ENCODE measurements at regions of chr17 and their contacts with region 1.

Region 1: DNA sequence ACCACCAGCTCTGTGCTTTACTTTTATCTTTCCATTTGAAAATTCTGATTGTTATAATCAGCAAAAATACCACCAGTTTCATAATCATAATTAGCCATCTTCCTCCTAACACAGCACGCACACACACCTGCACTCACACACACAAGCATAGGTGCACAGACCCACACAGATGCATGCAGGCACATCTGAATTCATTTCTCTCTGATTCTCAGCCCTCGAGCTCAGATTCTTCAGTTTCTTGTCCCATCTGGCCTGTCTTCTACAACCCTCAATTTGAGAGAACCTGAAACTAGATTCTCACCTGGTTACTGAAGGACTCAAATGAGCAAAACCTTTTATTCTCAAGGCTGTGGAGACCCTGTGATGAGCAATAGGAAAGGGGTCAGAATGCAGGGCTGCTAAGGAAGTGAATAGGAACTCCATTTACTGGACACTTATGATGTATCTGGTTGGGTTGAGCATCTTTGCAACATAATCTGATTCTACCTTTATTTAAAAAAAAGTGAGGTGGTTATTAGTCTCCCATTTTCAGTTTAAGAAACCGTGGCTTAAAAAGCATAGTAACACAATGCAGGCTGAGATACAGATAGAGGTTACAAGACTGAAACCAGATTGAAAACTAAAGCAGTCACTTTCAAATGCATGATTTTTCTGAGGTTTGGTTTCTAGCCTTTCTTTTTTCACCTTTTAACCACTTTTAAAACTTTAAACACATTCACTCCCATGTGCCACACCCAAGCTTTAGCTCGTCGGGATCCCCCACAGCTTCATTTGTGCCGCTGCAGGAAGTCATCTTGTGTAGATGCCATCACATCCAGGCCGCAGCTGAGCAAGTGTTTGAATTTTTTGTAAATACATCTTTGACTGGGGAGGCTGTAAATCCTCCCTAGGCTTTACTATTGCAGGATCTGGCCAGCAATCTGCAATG is 9.4 kb downstream of the KRT33A start:
- DNase-seq: no peak
- H3K4me3 ChIP-seq: no peak overlapping the region
- H3K4me3 Mint-ChIP-seq: no peak overlapping the region
- H3K27ac ChIP-seq: no peak overlapping the region
- H3K27ac Mint-ChIP-seq: no peak overlapping the region
- H3K4me1 ChIP-seq: peaks cover 22 to 29% of the 10 kb centered on the region in 2 donors
- H3K4me1 Mint-ChIP-seq: peaks cover 25% of the 10 kb centered on the region
- H3K27me3 ChIP-seq: no peaks in the 10 kb centered on the region
- H3K27me3 Mint-ChIP-seq: peaks cover 4 to 6% (median 4%) of the 10 kb centered on the region in 3 donors
- CTCF ChIP-seq: no peak

Region 2: GRCh38 chr17:41278176-41278955 is 62.8 kb before region 1 on chr17:
- intact Hi-C with region 1: no loop called
- DNase-seq: no peak
- H3K4me3 ChIP-seq: no peak overlapping the region
- H3K4me3 Mint-ChIP-seq: no peak overlapping the region
- H3K27ac ChIP-seq: no peak overlapping the region
- H3K27ac Mint-ChIP-seq: no peak overlapping the region
- H3K4me1 ChIP-seq: no peaks in the 10 kb centered on the region
- H3K4me1 Mint-ChIP-seq: no peaks in the 10 kb centered on the region
- H3K27me3 ChIP-seq: peaks cover 11 to 12% of the 10 kb centered on the region in 2 donors
- H3K27me3 Mint-ChIP-seq: peaks cover 0 to 13% (median 10%) of the 10 kb centered on the region in 3 donors
- CTCF ChIP-seq: no peak

Region 3: GRCh38 chr17:41360296-41360995 is 19.2 kb after region 1 on chr17:
- intact Hi-C with region 1: loop called in 1 of 2 experiments (anchors 1 kb)
- DNase-seq: no peak
- H3K4me3 ChIP-seq: no peak overlapping the region
- H3K4me3 Mint-ChIP-seq: no peak overlapping the region
- H3K27ac ChIP-seq: no peak overlapping the region
- H3K27ac Mint-ChIP-seq: peak overlapping the region in 1 of 7 donors; percentile 53
- H3K4me1 ChIP-seq: no peaks in the 10 kb centered on the region
- H3K4me1 Mint-ChIP-seq: no peaks in the 10 kb centered on the region
- H3K27me3 ChIP-seq: peaks cover 0 to 5% of the 10 kb centered on the region in 2 donors
- H3K27me3 Mint-ChIP-seq: peaks cover 1 to 9% (median 5%) of the 10 kb centered on the region in 3 donors
- CTCF ChIP-seq: no peak

Measured in CD14-positive monocyte (primary cell).